Dorsolateral prefrontal cortex (tissue), 120 donors: ENCODE measurements at regions of chr2 and their contacts with region 1.

Region 1: DNA sequence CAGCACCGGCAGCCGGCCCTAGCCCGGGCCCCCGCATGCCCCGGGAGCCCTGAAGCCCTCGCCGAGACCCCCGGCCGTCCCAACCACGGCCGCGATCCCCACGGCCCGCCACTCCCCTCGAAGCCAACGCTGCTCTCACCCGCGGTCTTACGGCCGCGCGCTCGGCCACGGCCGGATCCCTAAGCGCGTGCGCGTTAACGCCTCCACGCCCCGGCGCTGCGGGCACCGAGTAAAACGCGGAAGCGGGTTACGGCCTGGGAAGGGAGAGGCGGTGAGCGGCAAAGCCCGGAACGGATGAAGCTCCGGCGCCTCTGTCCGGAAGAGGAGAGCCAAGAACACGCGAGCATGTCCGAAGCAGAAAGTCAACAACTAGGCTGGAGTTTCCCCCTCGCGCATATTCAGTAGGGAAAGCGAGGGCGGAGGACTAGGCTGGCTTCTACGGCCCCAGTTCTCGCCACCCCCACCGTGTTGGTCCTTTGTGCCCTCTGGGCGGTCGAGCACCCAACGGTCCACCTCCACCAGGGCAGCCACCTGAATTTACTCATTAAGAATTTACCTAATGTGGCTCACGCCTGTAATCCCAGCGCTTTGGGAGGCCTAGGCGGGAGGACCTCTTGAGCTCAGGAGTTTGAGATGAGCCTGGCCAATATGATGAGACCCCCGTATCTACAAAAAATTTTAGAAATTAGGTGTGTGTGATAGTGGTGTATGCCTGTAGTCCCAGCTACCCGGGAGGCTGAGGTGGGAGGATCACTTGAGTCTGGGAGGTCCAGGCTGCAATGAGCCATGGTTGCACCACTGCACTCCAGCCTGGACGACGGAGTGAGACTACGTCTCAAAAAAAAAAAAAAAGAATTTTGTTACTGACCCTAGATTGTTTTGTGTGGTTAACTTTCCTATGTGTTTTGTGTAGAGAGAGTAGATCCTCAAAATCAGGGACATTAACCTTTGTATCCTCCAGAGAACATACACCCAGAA is at the start of gene KANSL3:
- DNase-seq: peak; percentile 73 to 92 (median 82)
- H3K4me3 ChIP-seq: peak within 1 kb of the TSS; percentile 57 to 95 (median 83)
- H3K27ac ChIP-seq: peak within 1 kb of the TSS in 56 of 59 donors; percentile 18 to 95 (median 84)
- H3K27me3 ChIP-seq: no peaks in the 10 kb centered on the region
- CTCF ChIP-seq: peak in 31 of 56 donors; percentile 6 to 58 (median 26)
- total RNA-seq, gene KANSL3: 39.7 to 81.1 (median 55.0) TPM

Region 2: GRCh38 chr2:96174251-96175144 is 463.9 kb before region 1 on chr2:
- intact Hi-C with region 1: no loop called
- DNase-seq: peak; percentile 64 to 86 (median 79)
- H3K4me3 ChIP-seq: no peak overlapping the region
- H3K27ac ChIP-seq: peak overlapping the region in 5 of 59 donors; percentile 8 to 56 (median 15)
- H3K27me3 ChIP-seq: no peaks in the 10 kb centered on the region
- CTCF ChIP-seq: peak; percentile 48 to 99 (median 94)

Region 3: DNA sequence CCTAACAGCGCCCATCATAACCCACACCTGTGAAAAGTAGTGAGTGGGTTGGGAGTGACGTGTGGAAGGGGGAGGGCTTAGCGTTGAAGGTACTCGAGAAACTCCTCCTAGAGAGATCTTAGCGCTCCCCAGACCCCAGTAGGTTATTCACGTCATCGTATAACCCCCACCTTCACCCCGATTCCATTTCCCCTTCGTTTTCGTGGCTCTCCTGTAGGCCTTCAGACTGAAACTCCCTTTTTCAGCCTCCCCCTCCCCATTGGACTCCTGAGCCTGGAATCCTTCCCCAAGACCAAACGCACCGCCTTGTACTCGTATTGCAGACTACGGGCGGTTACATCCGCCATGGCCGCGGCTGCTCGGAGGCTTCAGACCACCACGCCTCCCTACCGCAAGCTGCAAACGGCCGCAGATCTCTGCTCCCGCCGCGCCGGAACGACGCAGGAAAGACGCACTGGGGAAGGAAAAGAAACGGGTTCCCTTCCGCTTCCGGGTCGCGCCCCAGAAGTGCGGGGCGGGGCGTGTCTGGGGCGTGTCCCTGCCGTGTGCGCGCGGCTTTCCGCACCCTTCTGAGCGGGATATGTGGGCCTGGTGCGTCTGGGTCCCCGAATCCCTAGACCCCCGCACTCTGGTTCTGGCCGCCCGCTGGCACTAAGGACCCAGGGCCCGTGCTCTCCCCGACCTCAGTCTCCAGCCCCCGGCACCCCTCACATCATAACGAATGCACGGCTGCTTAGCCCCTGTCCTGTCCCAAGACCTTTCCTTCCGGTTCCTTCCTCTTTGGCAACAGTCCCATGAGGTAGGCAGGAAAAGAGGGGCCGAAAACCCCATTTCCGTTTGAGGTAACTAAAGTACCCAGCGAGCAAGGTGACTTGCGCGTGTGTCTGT is 333.1 kb before region 1 on chr2 and contains the start of gene SNRNP200:
- intact Hi-C with region 1: no loop called
- DNase-seq: peak; percentile 83 to 94 (median 90)
- H3K4me3 ChIP-seq: peak within 1 kb of the TSS; percentile 63 to 100 (median 86)
- H3K27ac ChIP-seq: peak within 1 kb of the TSS in 54 of 59 donors; percentile 14 to 94 (median 74)
- H3K27me3 ChIP-seq: no peaks in the 10 kb centered on the region
- CTCF ChIP-seq: peak in 30 of 56 donors; percentile 6 to 51 (median 25)
- total RNA-seq, gene SNRNP200: 76.1 to 117 (median 91.0) TPM

Region 4: DNA sequence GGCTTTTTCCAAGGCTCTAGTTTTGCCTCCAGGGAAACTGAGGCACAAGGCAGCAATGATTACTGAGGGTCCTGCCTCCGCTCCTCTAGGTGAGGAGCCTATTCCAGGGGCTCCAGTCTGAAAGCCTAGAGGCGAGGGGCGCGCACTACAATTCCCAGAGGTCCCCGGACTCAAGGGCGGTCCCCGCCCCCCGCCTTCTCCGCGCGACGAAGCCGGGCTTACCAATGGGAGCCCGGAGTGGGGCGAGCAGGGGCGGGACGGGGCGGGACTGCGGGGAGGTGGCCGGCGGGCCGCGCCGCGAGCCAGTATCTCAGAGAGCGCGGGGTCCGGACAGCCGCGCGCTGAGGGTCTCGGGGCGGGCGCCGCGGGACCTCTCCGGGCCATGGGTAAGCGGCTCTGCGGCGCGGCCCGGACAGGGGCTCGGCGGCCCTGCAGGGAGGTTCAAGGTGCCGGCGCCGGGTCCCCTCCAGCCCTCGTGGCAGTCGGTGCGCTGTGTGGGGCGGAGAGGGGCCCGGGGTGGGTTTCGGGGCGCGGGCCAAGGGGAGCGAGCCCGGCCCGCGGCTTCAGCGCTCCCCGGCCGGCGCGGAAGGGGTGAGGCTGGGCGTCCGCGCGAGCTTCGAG is 101.9 kb before region 1 on chr2 and contains the start of gene ARID5A:
- intact Hi-C with region 1: loop called in 1 of 2 experiments (anchors 10 kb)
- DNase-seq: peak; percentile 87 to 95 (median 93)
- H3K4me3 ChIP-seq: peak within 1 kb of the TSS; percentile 66 to 98 (median 89)
- H3K27ac ChIP-seq: peak within 1 kb of the TSS; percentile 51 to 97 (median 90)
- H3K27me3 ChIP-seq: no peaks in the 10 kb centered on the region
- CTCF ChIP-seq: peak; percentile 26 to 71 (median 55)
- total RNA-seq, gene ARID5A: 9.3 to 61.4 (median 19.7) TPM

Region 5: DNA sequence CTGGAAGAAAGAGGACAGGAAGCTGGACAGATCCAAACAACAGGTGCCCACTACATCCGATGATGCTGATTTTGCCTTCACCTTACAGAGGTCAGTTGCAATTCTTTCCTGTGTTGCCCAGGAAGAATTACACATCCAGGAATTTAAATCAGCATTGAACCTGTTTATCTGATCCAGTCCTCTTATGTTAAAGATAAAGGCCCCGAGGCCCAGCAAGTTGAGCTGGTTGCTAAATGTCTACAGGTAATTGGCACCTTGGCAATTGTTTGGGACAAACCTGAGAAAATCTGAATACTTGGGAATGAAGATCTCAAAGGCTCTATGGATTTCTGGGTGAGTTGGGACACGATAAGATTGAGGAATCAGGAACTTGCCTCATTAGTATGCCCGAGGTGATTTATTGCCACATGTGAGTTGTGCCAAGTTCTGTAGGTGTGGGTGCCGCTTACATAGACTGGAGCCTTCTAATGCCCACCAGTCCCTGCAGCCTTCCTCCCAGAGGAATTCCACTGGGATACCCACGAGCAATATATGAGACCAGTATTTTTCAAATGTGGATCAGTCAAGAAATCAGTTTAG is 115.4 kb after region 1 on chr2:
- intact Hi-C with region 1: no loop called
- DNase-seq: no peak
- H3K4me3 ChIP-seq: no peak overlapping the region
- H3K27ac ChIP-seq: no peak overlapping the region
- H3K27me3 ChIP-seq: no peaks in the 10 kb centered on the region
- CTCF ChIP-seq: no peak

Region 6: DNA sequence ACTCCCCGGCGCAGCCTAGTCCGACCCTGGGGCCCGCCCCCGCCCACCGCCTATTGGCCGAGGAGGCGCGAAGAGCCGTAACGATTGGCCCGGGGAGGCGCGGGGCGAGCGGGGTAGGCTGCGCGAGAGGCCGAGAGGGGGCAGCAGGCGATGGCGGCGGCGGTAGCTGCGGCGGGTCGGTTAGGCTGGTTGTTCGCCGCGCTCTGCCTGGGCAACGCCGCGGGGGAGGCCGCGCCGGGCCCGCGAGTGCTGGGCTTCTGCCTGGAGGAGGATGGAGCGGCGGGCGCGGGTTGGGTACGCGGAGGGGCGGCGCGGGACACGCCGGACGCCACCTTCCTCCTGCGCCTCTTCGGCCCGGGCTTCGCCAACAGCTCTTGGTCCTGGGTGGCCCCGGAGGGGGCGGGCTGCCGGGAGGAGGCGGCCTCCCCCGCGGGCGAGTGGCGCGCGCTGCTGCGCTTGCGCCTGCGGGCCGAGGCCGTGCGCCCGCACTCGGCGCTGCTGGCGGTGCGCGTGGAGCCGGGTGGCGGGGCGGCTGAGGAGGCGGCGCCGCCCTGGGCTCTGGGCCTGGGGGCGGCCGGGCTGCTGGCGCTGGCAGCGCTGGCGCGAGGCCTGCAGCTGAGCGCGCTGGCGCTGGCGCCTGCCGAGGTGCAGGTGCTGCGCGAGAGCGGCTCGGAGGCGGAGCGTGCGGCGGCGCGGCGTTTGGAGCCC is 177.8 kb after region 1 on chr2 and contains the start of gene CNNM3:
- intact Hi-C with region 1: loop called in 1 of 2 experiments (anchors 5 kb)
- DNase-seq: peak; percentile 89 to 98 (median 96)
- H3K4me3 ChIP-seq: peak within 1 kb of the TSS; percentile 62 to 94 (median 82)
- H3K27ac ChIP-seq: peak within 1 kb of the TSS; percentile 92 to 99 (median 98)
- H3K27me3 ChIP-seq: no peaks in the 10 kb centered on the region
- CTCF ChIP-seq: peak in 55 of 56 donors; percentile 23 to 80 (median 60)
- total RNA-seq, gene CNNM3: 15.1 to 52.1 (median 34.2) TPM

Region 7: DNA sequence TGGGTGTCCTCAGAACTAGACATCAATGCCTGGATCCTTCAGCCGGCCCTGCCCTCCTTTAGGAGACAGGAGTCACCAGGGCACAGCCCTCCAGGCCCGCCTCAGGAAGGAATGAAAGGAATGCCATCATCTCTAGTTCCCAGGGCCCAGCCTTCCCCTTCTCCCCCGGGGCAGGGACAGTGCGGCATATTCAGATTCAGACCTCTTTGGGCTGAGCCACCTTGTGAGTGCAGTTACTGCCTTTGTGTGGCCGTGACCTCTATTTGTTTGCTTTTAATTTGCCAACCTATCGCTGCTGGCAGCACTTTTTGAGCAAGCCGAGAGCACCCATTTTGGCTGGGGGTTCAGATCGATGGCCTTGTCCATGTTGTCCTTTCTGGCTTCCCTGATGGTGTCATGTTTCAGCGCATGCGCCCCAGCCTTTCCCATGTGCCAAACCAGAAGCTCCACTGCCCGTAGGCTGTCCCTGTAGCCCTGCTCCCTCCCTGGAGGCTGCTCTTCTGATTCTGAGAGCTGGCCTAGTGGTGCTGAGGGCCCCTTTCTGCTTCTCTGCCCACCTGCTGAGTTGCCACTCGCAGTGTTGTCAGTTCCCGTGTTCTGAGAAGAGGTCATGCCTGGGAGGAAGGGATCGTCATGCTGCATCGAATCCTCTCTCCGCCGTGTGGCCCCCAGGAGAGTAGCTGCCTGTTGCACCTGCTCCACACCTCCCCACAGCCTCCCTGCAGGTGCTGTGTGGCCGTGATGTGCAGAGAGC is 194.5 kb after region 1 on chr2:
- intact Hi-C with region 1: no loop called
- DNase-seq: peak in 1 of 10 donors; percentile 54
- H3K4me3 ChIP-seq: no peak overlapping the region
- H3K27ac ChIP-seq: peak overlapping the region in 26 of 59 donors; percentile 0 to 71 (median 25)
- H3K27me3 ChIP-seq: no peaks in the 10 kb centered on the region
- CTCF ChIP-seq: no peak